ENCODE measurements at regions of chr15 and their contacts with region 1.

Region 1: DNA sequence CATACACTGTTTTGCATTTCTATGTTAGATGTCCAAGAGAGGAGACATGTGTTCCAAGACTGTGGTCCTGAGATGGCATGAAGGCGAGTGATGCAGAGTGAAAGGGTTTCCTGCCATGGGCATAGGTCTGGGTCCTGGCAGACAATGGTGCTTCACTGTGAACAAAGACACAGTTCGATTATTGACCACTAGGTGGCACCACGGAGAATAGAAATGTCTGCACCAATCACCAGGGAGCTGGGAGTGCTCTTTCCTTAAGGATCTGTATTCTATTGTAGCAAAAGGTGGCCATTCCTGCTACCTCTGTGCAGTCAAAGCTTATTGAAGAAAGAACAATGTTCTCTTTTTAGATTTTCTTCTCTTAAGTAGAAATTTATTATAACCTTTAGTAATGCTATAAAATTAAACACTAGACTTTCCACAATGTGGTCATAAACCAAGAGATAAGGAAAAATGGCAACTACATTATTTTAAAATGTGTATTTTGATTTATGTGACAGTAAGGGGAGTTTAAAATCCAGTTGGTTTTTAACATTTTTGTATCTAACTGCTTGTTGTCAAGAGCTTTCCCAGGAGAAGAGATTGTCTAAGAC is 88.7 kb downstream of the GABRG3 start:
- DNase-seq: peak in 1 of 2 donors; percentile 24
- ATAC-seq: peak in 1 of 8 donors; percentile 61
- H3K4me3 ChIP-seq: no peak overlapping the region
- H3K27ac ChIP-seq: no peak overlapping the region
- H3K4me1 ChIP-seq: no peaks in the 10 kb centered on the region
- H3K27me3 ChIP-seq: peaks cover 0 to 4% (median 0%) of the 10 kb centered on the region in 7 donors
- CTCF ChIP-seq: peak; percentile 31 to 68 (median 60)

Region 2: GRCh38 chr15:27037501-27037900 is 22.2 kb before region 1 on chr15:
- intact Hi-C with region 1: loop called in 1 of 10 experiments (anchors 2 kb)
- DNase-seq: no peak
- ATAC-seq: no peak
- H3K4me3 ChIP-seq: no peak overlapping the region
- H3K27ac ChIP-seq: no peak overlapping the region
- H3K4me1 ChIP-seq: no peaks in the 10 kb centered on the region
- H3K27me3 ChIP-seq: no peaks in the 10 kb centered on the region
- CTCF ChIP-seq: no peak

Region 3: GRCh38 chr15:27119695-27120266 is 60.1 kb after region 1 on chr15:
- intact Hi-C with region 1: loop called in 1 of 10 experiments (anchors 10 kb)
- DNase-seq: no peak
- ATAC-seq: no peak
- H3K4me3 ChIP-seq: no peak overlapping the region
- H3K27ac ChIP-seq: no peak overlapping the region
- H3K4me1 ChIP-seq: no peaks in the 10 kb centered on the region
- H3K27me3 ChIP-seq: no peaks in the 10 kb centered on the region
- CTCF ChIP-seq: no peak

Region 4: DNA sequence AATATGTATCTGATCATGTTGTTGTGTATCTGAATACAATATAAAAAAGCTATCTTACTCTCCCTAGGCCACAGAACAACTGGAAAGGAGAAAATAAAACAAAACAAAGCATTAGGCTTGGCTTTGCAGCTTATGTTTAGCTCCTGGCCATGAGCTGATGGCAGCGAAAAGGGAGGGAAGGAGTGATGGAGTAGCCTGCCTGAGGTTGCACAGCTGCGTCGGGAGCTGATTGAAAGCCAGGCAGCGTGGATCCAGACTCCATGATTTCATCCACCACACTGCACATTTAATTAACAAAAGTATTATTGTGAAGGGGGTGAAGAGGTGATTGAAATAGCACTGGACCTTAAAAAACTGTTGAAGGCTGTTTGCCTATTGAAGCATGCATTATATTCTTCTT is 123.5 kb after region 1 on chr15:
- intact Hi-C with region 1: no loop called
- DNase-seq: no peak
- ATAC-seq: no peak
- H3K4me3 ChIP-seq: no peak overlapping the region
- H3K27ac ChIP-seq: no peak overlapping the region
- H3K4me1 ChIP-seq: no peaks in the 10 kb centered on the region
- H3K27me3 ChIP-seq: no peaks in the 10 kb centered on the region
- CTCF ChIP-seq: no peak

Measured in heart right ventricle (tissue), 16 donors.